ENCODE measurements at regions of chr1 and their contacts with region 1.

Region 1: GRCh38 chr1:198465201-198466144 is 75.0 kb downstream of the ATP6V1G3 start:
- DNase-seq: peak; percentile 66
- H3K4me3 ChIP-seq: no peak overlapping the region
- H3K27ac ChIP-seq: peak overlapping the region; percentile 25
- H3K4me1 ChIP-seq: peaks cover 29% of the 10 kb centered on the region
- H3K27me3 ChIP-seq: no peaks in the 10 kb centered on the region
- CTCF ChIP-seq: peak; percentile 61 to 65

Region 2: GRCh38 chr1:197521118-197521739 is 944.2 kb before region 1 on chr1:
- CTCF ChIA-PET with region 1: no interaction called
- dilution Hi-C with region 1: no loop called
- in situ Hi-C with region 1: no loop called
- intact Hi-C with region 1: loop called (anchors 1 kb)
- DNase-seq: peak; percentile 17
- H3K4me3 ChIP-seq: no peak overlapping the region
- H3K27ac ChIP-seq: no peak overlapping the region
- H3K4me1 ChIP-seq: no peaks in the 10 kb centered on the region
- H3K27me3 ChIP-seq: no peaks in the 10 kb centered on the region
- CTCF ChIP-seq: peak; percentile 67 to 69

Region 3: DNA sequence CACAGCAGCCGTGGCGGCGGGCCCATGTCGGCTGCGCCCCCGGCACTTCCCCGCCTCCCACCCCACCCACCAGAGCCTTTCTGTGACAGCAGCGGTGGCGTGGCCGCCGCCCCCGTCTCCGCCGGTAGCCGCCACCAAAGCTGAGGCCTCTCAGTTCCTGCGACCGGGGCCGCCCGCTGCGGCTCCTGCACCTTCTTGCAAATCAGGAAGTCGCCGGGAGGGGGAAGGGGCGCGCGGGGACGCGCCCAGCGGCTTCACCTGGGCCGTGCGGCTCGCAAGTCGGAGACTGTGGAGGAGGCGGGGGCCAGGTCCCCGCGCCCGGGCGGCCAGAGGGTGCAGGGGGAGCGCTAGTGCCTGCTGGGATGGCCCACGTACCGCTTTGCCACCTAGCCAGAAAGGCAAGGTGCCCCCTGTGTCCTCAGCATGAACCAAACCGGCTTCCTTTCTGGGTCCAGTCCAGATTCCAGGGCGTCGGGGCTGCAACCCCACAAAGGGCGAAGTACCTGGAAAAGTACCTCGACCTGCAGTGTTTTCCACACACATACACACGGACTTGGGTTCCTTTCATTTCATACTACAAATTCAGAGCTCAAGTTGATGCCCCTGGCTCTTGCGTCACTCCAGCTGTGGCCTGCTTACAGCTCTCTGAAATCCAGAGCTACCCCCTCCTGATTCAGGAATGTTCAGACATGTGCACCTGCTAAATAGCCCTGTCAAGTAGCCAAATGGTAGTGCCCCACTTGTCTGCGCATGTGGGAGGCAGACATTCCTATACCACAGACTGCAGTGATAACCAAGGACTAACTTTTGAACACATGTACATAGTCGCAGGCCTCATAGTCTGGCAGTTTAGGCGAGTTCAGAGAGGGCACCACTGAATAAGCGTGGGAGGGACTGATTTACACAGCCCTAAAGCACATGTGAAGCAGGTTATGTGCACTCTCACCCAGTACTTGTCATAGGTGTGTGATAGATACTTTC is 689.9 kb before region 1 on chr1 and contains the start of gene DENND1B:
- CTCF ChIA-PET with region 1: no interaction called
- dilution Hi-C with region 1: no loop called
- in situ Hi-C with region 1: no loop called
- intact Hi-C with region 1: loop called (anchors 5 kb)
- DNase-seq: peak; percentile 69
- H3K4me3 ChIP-seq: peak within 1 kb of the TSS; percentile 76 to 78 (median 77)
- H3K27ac ChIP-seq: peak within 1 kb of the TSS; percentile 83
- H3K4me1 ChIP-seq: peaks cover 23% of the 10 kb centered on the region
- H3K27me3 ChIP-seq: no peaks in the 10 kb centered on the region
- CTCF ChIP-seq: peak in 1 of 2 donors; percentile 22
- total RNA-seq, gene DENND1B: 12.5 to 31.7 TPM

Region 4: GRCh38 chr1:198072177-198072576 is 393.3 kb before region 1 on chr1:
- CTCF ChIA-PET with region 1: no interaction called
- dilution Hi-C with region 1: no loop called
- in situ Hi-C with region 1: loop called (anchors 25 kb)
- intact Hi-C with region 1: loop called (anchors 1 kb)
- DNase-seq: peak; percentile 9
- H3K4me3 ChIP-seq: no peak overlapping the region
- H3K27ac ChIP-seq: no peak overlapping the region
- H3K4me1 ChIP-seq: no peaks in the 10 kb centered on the region
- H3K27me3 ChIP-seq: no peaks in the 10 kb centered on the region
- CTCF ChIP-seq: peak in 1 of 2 donors; percentile 22

Region 5: DNA sequence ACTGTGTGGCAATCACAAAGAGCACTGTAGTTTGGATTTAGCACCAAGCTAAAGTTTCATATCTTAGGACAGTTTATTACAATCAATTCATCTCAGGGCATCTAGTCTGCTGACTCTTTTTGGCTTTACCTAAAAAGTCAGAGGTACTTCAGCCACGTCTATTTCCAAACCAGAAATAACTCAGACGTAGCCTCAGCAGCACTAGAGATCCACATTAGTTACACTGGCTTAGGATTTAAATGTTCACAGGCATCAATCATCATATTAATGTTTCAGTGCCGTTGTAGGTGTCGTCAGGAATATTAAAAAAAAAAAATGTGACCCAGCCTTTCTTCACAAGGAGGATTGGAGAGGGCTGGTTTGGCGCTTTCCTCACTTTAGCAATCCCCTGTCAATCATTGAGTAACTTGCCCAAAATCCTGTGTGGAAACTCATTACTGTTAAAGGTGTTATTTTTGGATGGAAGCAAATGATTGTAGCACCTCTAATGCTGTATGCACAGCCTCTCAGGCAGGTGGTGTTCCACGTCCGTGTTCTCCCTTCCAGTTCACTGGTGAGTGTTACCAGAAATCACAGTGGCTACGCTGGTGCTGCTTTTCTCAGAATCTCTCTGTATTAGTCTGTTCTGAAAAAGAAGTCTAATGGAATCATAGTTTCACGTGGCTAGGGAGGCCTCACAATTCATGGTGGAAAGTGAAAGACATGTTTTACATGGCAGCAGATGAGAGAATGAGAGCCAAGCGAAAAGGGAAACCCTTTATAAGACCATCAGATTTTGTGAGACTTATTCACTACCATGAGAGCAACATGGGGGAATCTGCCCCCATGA is 263.3 kb before region 1 on chr1:
- CTCF ChIA-PET with region 1: no interaction called
- dilution Hi-C with region 1: no loop called
- in situ Hi-C with region 1: loop called in 1 of 2 experiments (anchors 25 kb)
- intact Hi-C with region 1: loop called (anchors 1 kb)
- DNase-seq: no peak
- H3K4me3 ChIP-seq: no peak overlapping the region
- H3K27ac ChIP-seq: no peak overlapping the region
- H3K4me1 ChIP-seq: peaks cover 4% of the 10 kb centered on the region
- H3K27me3 ChIP-seq: no peaks in the 10 kb centered on the region
- CTCF ChIP-seq: no peak

Region 6: DNA sequence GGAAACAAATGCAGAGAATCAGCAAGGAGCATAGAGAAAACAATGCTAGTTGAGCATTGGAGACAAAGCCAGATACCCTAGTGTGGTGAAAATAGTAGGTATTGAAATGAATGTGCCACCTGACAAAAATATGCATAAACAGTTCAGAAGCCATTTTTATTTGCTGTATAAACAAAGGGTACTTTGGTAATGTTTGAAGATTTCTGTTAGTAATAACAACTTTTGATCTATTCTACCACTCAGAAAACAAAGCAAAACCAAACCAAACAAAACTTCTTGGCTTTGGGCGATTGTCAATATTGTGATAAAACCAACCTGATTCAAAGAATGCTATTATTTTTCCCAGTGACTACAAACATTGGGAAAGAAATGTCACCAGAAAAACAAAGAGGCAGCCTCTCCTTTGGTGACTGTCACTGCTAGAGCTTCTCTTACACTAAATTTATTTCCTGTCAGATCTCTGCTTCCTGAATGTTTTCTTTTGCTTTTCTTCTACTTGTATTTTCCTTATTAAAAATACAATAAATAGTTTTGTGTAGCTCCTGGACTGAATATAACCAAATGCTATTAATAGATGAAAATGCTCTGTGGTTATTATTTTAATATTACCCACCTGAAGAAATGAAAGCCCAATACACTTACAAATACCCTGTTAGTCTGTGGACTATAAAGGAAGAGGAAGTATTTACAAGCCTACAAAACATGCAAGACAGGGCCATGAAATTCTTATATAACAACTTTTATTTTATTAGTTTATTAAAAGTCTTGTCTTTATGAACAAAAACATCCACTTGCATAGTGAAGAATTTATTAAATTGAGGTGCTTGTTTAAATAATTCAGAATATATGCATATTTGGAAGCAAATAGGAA is 69.3 kb after region 1 on chr1:
- CTCF ChIA-PET with region 1: no interaction called
- dilution Hi-C with region 1: no loop called
- in situ Hi-C with region 1: no loop called
- intact Hi-C with region 1: no loop called
- DNase-seq: no peak
- H3K4me3 ChIP-seq: no peak overlapping the region
- H3K27ac ChIP-seq: no peak overlapping the region
- H3K4me1 ChIP-seq: no peaks in the 10 kb centered on the region
- H3K27me3 ChIP-seq: no peaks in the 10 kb centered on the region
- CTCF ChIP-seq: no peak

Region 7: GRCh38 chr1:198681831-198682759 is 216.6 kb after region 1 on chr1:
- CTCF ChIA-PET with region 1: interaction called, 5 read pairs
- dilution Hi-C with region 1: no loop called
- in situ Hi-C with region 1: loop called in 1 of 2 experiments (anchors 25 kb)
- intact Hi-C with region 1: loop called (anchors 1 kb)
- DNase-seq: peak; percentile 94
- H3K4me3 ChIP-seq: peak overlapping the region in 2 of 3 experiments; percentile 2 to 24
- H3K27ac ChIP-seq: peak overlapping the region; percentile 80
- H3K4me1 ChIP-seq: peaks cover 8% of the 10 kb centered on the region
- H3K27me3 ChIP-seq: no peaks in the 10 kb centered on the region
- CTCF ChIP-seq: no peak